SK-N-SH (cell line): ENCODE measurements at regions of chr2 and their contacts with region 1.

Region 1: GRCh38 chr2:42906557-42907411 is 114.4 kb upstream of the HAAO start:
- DNase-seq: peak; percentile 85
- H3K4me3 ChIP-seq: no peak overlapping the region
- H3K27ac ChIP-seq: peak overlapping the region in 1 of 2 experiments; percentile 90; a peak in 2 of 4 replicates
- H3K4me1 ChIP-seq: peaks cover 10 to 40% of the 10 kb centered on the region in 2 experiments
- H3K27me3 ChIP-seq: no peaks in the 10 kb centered on the region
- CTCF ChIP-seq: no peak
- EP300 ChIP-seq: peak in 1 of 2 experiments; percentile 82; a peak in 1 of 4 replicates
- RAD21 ChIP-seq: no peak

Region 2: DNA sequence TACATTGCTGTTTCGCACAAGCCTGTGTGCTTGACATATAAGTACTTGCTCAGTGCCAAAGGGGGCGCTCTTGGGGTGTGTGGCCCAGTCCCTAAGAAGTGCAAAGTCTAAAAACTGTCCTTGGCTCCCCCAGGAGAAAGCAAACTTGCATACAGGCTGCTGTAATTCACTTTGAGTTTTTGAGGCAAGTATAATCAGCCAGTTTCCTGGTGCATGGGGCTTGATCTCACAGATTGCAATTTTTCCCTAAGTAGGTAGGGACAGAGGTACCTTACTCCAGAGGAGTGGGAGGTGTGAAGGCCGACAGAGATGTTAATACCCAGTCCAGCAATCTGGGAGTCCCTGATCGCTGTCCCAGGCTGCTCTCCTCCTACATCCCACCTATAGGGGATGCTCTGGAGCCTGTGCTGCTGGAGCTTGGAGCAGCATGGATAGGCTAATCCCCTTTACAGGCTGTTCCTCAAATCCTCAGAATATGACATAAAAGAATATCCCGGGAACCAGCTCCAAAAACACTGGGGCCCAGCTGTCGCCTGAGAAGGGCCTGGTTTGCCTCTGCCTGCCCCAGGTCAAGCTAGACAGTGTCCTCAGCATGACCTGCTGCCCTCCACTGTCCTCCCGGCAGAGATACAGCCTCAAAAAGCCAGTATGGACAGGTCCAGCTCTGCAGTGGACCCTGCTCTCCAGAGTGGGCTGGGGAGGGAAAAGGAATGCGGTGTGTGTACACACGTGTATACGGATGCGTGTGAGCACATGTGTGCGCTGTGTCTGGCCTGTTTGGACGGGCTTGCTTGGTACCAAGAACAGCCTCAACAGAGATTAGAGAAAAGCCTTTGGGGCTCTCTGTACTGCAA is 22.1 kb after region 1 on chr2:
- CTCF ChIA-PET with region 1: interaction called, 25 read pairs
- POLR2A ChIA-PET with region 1: interaction called, 3 read pairs
- DNase-seq: peak; percentile 76
- H3K4me3 ChIP-seq: no peak overlapping the region
- H3K27ac ChIP-seq: peak overlapping the region in 1 of 2 experiments; percentile 39; a peak in 1 of 4 replicates
- H3K4me1 ChIP-seq: peaks cover 25 to 70% of the 10 kb centered on the region in 2 experiments
- H3K27me3 ChIP-seq: no peaks in the 10 kb centered on the region
- CTCF ChIP-seq: peak; percentile 53
- EP300 ChIP-seq: no peak
- RAD21 ChIP-seq: peak; percentile 46

Region 3: DNA sequence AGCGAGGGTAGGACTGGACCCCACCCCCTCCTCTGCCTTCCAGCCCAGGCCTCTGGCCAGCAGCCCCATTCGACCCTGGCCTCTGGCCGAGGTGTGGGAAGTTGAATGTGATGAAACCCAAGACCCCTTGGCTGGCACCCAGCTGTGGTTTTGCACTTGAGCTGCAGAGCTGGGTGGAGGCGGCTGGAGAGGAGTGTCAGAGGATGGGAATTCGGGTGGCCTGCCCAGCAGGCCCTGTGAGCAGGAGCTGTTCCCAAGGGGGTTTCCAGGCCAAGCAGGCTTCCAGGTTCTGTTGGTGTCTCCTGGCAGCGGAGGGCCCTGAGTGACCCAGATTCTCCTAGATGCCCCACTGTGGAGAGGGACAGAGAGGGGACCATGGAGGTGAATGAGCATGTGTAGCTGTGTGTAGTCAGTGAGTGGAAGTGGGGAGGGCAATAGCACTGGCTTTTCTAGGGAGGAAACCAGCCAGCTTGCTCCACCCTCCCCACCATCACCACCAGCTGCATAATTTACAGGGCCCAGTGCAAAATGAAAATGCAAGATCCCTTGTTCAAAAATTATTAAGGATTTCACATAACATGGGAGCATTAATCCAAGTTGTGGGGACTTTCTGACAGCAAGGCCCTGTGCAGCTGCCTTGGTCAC is 57.8 kb after region 1 on chr2:
- CTCF ChIA-PET with region 1: no interaction called
- POLR2A ChIA-PET with region 1: no interaction called
- DNase-seq: no peak
- H3K4me3 ChIP-seq: no peak overlapping the region
- H3K27ac ChIP-seq: peak overlapping the region; percentile 43 to 85; a peak in 3 of 4 replicates
- H3K4me1 ChIP-seq: peaks cover 38 to 41% of the 10 kb centered on the region in 2 experiments; a peak in 3 of 4 replicates
- H3K27me3 ChIP-seq: no peaks in the 10 kb centered on the region
- CTCF ChIP-seq: no peak
- EP300 ChIP-seq: peak in 1 of 2 experiments; percentile 94; a peak in 2 of 4 replicates
- RAD21 ChIP-seq: no peak